ENCODE measurements at regions of chr3 and their contacts with region 1.

Region 1: DNA sequence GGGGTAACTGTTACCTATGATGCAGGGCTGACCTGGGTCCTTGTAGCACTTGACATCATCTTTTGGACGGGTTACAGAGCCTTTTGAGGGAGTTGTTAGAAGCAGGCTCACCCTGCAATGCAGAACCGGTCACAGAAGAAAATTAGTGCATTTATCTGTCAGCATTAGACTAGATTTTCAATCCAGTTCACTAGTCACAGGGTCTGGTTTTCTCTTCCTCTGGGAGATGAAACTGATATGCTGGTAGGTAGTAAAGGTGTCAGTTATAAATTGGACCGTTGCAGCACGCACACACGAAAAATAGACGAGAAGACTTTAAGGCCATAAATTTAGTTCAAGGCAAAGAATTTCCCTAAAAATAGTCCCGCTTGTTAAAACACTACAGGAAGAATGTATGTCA is 532.3 kb upstream of the ATP11B start:
- DNase-seq: no peak
- H3K4me3 ChIP-seq: no peak overlapping the region
- CTCF ChIP-seq: no peak
- POLR2A ChIP-seq: no peak

Region 2: DNA sequence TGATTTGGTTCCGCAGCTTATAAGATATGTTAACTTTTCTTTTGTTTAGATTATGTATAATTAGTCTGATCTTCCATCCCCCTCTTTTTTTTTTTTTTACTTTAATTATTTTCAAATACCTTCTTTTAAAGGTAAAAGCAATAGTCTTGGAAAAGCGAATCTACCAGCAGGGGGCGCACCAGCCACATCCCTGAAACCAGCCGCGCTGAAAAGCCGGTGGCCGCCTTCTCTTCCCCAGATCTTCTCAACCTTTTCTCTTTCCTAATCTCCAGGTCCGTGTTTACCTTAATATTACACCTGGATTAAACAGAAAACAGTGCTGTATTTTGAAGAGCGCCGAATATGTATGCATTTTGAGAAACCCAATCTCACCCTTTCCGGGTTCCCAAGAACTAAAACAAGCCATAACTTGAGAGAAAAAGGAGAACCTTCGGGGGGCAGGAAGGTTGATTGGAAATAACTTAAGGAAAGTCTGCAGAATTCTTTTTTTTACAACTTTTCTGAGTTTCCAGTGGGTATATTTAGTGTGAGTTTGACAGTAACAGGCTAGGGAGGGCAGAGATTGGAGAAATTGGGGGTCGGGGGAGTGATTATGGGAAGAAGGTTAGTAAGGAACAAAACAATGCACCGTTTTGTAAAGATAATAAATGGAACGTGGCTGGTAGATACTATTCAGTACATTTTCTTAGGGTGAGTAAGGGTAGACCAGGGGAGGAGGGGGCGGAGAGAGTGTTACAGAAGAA is 551.3 kb before region 1 on chr3:
- intact Hi-C with region 1: loop called (anchors 5 kb)
- DNase-seq: peak in 1 of 2 donors; percentile 64
- H3K4me3 ChIP-seq: no peak overlapping the region
- CTCF ChIP-seq: no peak
- POLR2A ChIP-seq: no peak

Region 3: DNA sequence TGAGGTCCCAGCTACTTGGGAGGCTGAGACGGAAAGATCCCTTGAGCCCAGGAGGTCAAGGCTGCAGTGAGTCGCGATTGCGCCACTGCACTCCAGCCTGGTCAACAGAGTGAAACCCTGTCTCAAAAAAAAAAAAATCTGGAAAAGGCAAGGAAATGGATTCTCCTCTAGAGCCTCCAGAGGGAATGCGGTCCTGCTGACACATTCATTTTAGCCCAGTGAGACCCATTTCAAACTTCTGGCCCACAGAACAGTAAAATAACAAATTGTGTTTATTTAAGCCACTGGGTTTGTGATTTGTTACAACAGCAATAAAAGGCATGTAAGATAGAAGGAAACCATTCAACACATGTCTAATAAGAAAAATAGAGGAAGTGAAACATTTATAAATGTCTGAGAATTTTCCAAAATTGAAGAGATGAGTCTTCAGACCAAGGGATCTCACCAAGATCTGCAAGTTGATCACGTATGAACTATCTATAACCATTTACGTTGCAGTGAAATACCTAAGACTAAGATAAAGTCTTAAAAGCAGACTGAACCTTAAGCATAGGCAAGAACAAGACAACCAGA is 1835.9 kb after region 1 on chr3 and contains the start of gene HTR3E:
- intact Hi-C with region 1: no loop called
- DNase-seq: no peak
- H3K4me3 ChIP-seq: no peak within 1 kb of the TSS
- CTCF ChIP-seq: no peak
- POLR2A ChIP-seq: no peak
- total RNA-seq, gene HTR3E: not detected